ENCODE measurements at regions of chr11 and their contacts with region 1.

Region 1: DNA sequence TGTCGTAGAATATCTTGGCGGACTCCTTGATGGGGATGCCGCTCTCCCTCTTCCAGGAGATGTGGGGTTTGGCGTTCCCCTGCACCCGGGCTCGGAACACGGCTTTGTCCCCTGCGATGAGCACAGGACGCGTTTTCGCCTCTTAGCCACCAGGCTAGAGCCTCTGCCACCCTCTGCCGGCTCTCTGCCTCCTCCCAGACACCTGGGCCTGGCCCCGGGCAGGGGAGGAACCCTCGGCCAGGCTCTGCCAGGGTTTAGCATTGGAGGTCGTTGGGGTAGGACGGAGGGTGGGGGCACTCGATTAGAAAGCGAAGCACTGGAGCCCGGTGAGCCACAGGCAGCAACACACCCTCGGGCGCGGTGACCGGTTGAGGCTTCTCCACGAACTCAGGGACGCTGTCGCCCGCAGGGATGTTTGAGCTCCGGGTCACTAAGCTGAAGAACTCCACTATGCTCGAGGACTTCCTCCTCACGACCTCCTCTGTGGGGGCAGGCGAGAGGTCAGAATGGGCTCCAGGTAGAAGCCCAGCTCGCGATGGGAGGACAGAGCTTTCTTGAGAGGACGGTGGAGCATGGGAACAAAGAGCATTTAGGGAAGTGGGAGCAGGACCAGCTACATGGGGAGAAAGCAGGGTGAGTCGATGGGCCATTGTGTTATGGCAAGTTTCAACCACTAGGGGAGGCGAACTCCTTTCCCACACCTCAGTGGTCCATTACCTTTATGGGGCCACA is 4.3 kb downstream of the IGSF22 start:
- DNase-seq: peak; percentile 74
- H3K4me3 ChIP-seq: peak overlapping the region; percentile 62 to 73
- H3K27ac ChIP-seq: peak overlapping the region; percentile 31 to 67
- H3K4me1 ChIP-seq: peaks cover 0 to 22% of the 10 kb centered on the region in 2 experiments; a peak in 1 of 4 replicates
- H3K27me3 ChIP-seq: no peaks in the 10 kb centered on the region
- CTCF ChIP-seq: peak; percentile 75
- EP300 ChIP-seq: no peak
- RAD21 ChIP-seq: peak; percentile 34; the same call in 1 of the 2 replicates

Region 2: DNA sequence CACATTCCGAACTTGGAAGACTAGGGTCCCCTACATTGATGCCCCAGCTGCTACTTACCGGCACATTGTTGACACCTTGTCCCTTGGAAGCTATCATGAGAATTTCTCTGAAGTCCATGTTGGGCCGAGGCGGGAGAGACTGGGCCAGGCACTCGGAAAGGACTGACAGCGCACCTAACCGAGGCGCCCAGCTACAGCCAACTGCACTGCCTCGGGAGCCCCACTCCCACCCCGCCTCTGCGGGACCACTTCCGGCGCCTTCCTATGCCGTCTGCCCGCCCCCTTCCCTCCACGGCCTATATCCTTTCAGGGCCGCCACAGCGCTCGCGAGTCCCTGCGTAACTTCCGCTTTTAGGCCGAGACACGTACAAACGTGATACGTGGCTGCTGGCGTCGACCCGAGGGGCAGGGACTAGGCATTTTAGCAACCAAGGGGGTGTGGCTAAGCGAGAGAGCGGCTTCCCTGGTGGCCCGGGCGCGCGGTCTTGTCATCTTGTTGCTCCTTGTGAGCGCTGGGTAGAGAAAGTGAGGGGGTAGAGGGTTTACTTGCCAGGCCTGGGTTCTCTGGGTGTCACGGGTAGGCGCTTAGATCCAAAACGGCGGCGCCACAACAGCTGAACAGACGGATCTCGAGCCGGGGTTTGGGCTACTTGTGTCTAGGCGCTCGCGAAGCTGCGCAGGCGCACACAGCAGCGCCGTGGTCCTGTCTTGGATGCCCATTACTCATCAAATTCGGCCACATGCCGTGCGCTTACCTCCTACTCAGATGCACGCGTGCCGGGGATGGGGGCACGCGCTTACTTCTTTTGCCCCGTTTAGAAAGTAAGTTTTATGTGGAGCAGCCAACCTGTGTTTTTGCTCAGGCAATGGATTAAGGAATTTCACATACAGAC is 87.3 kb before region 1 on chr11 and contains the start of gene SPTY2D1:
- CTCF ChIA-PET with region 1: interaction called, 14 read pairs
- POLR2A ChIA-PET with region 1: interaction called, 3 read pairs
- DNase-seq: peak; percentile 91
- H3K4me3 ChIP-seq: peak within 1 kb of the TSS; percentile 85 to 98
- H3K27ac ChIP-seq: peak within 1 kb of the TSS; percentile 91 to 93
- H3K4me1 ChIP-seq: peaks cover 8 to 9% of the 10 kb centered on the region in 2 experiments; a peak in 3 of 4 replicates
- H3K27me3 ChIP-seq: no peaks in the 10 kb centered on the region
- CTCF ChIP-seq: no peak
- EP300 ChIP-seq: no peak; a peak in 1 of 4 replicates
- RAD21 ChIP-seq: no peak
- polyA plus RNA-seq, gene SPTY2D1: 5.3 and 8.6 TPM in 2 replicates

Region 3: GRCh38 chr11:18706330-18707243 is 15.1 kb before region 1 on chr11:
- CTCF ChIA-PET with region 1: interaction called, 25 read pairs
- POLR2A ChIA-PET with region 1: interaction called, 9 read pairs
- DNase-seq: peak; percentile 90
- H3K4me3 ChIP-seq: peak overlapping the region; percentile 39 to 46; a peak in 3 of 4 replicates
- H3K27ac ChIP-seq: no peak overlapping the region
- H3K4me1 ChIP-seq: peaks cover 0 to 26% of the 10 kb centered on the region in 2 experiments; a peak in 2 of 4 replicates
- H3K27me3 ChIP-seq: peaks cover 9% of the 10 kb centered on the region; the same call in 1 of the 2 replicates
- CTCF ChIP-seq: no peak
- EP300 ChIP-seq: no peak
- RAD21 ChIP-seq: no peak

Region 4: DNA sequence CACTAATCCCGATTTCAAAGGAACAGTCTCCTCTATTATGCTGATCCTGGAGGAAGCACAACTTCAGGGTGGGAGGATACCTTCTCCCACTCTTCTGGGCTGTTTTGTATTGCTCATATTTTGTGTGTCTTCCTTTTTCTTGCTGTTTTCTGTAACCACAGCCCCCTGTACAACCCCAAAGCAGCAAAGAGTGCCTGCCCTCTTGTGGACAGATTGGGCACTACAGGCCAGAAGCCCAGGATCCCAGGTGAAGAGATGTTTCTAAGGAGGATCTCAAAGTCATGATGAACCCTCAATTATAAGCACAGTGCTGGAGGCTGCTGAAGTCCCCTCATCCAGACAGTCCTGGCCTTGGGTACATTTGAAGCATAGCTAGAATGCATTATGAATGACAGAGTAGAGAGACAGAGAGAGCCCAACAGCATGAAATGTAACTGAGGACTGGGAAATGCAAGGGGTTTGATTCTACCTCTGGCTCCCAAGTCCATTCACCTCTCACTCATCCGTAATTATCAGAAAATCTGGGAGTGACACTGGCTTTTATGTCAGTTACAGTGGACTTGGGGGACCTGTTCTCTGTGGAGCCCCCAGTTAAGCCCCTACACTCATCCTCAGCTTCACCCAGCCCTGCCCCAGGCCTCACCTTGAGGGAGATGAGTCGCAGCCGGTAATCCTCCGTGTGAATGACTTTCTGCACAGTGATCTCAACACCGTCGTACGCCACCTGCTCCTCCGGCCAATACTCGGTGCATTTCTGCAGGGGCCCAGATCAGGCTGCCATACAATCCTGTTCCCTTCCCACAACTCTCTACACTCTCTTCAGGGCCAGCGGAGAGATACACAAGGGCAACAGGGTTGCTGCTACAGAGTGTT is 10.5 kb after region 1 on chr11:
- CTCF ChIA-PET with region 1: interaction called, 59 read pairs
- POLR2A ChIA-PET with region 1: no interaction called
- DNase-seq: peak; percentile 86
- H3K4me3 ChIP-seq: no peak overlapping the region
- H3K27ac ChIP-seq: no peak overlapping the region
- H3K4me1 ChIP-seq: no peaks in the 10 kb centered on the region; a peak in 1 of 4 replicates
- H3K27me3 ChIP-seq: no peaks in the 10 kb centered on the region
- CTCF ChIP-seq: peak; percentile 98
- EP300 ChIP-seq: no peak
- RAD21 ChIP-seq: peak; percentile 84

Region 5: DNA sequence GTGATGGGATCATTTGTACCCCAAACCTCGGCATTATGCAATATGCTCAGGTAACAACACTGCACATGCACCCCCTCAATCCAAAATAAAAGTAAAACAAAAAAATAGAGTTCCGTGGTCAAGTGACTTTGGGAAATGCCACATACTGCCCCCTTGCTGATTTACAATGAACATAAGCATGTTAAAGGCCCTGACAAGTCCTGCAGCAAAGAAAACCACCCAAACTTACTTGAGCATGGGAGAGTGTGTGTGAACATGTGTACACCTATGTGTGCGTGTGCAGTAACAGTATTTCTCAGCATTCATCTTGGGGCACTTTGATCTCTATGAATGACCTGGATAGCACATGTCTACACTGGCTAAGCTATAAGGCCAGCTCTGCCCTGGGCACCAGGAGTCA is 20.1 kb after region 1 on chr11:
- CTCF ChIA-PET with region 1: interaction called, 26 read pairs
- POLR2A ChIA-PET with region 1: no interaction called
- DNase-seq: no peak
- H3K4me3 ChIP-seq: no peak overlapping the region
- H3K27ac ChIP-seq: no peak overlapping the region
- H3K4me1 ChIP-seq: no peaks in the 10 kb centered on the region; a peak in 1 of 4 replicates
- H3K27me3 ChIP-seq: no peaks in the 10 kb centered on the region
- CTCF ChIP-seq: no peak
- EP300 ChIP-seq: no peak
- RAD21 ChIP-seq: no peak